ENCODE measurements at regions of chr1 and their contacts with region 1.

Region 1: DNA sequence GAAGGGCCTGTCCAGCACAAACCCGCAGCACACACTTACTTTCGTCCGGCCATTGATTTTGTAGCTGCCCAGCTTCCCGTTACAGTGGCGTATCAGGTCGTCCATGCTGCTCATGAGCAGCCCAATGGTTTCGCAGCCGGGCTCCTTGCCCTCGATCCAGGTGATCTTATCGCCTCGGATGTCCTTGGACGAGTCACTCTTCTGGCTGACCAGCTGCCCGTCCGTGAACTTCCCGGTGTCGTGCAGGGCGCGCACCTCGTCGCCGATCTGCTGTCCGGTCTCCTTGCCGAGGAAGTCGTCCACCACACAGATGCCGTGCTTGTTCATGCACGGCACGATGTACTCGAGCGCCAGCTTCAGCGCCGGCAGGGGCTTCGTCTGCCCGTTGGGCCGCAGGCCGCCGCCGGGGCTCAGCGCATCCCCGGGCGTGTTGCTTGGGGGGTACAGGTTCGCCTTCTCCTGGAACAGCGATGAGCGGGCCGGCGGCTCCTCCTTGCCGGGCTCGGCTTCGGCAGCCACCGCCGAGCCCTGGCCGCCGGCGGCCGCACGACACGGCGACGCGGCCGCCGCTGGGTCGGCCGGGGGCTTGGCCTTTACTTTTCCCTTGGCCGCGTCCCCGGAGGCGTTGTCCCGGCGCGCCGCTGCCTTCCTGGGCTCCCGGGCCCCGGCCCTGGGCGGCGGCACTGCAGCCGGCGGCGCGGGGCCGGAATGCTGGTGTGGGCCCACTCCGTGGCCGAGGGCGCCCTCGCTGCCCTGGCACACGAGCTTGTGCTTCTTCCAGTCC is 936 bp downstream of the EGLN1 start:
- DNase-seq: peak; percentile 15
- H3K27ac ChIP-seq: peak overlapping the region; percentile 96
- CTCF ChIP-seq: no peak

Region 2: GRCh38 chr1:231557898-231558707 is 137.0 kb after region 1 on chr1:
- CTCF ChIA-PET with region 1: no interaction called
- POLR2A ChIA-PET with region 1: interaction called, 10 read pairs
- DNase-seq: no peak
- H3K27ac ChIP-seq: no peak overlapping the region
- CTCF ChIP-seq: no peak

Measured in RWPE1 (cell line).